ENCODE measurements at regions of chr9 and their contacts with region 1.

Region 1: DNA sequence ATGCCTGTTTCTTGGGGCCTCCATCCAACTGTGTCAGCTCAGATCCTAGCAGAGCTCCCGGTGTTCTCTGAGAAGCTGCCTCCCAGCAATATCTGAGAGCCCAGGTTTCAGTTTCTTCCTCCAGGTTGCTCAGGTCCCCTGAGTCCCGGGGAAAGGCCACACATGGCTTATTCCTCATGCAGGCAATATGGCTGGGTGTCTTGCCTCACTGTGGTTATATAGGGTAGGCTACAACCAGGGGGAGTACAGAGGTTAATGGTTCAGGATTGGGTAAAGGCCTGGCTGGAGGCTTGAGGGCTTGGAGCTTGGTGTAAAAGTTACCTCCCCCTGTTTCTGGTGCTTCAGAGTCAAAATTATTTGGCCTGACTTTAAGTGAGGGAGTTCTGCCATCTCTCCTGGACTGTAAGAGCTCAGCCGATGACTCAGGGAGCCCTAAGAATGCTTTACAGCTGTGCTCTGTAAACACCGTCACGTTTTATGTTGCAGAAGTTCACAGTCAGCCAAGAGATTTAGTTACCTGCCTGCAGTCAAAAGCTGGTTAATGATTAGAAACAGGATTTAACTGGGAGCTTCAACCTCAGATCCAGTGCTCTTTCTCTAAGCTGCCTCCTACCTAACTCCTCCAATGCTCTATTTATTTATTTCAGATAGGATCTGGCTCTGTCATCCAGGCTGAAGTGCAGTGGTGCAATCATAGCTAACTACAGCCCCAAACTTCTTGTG is 24.3 kb upstream of the UBAP2 start:
- DNase-seq: no peak
- ATAC-seq: peak; percentile 9; the same call in 1 of the 2 replicates
- H3K4me3 ChIP-seq: no peak overlapping the region
- H3K27ac ChIP-seq: peak overlapping the region; percentile 53
- H3K4me1 ChIP-seq: peaks cover 17 to 24% of the 10 kb centered on the region in 2 experiments
- H3K27me3 ChIP-seq: no peaks in the 10 kb centered on the region
- CTCF ChIP-seq: no peak
- POLR2A ChIP-seq: no peak
- RAD21 ChIP-seq: no peak

Region 2: GRCh38 chr9:34025062-34025461 is 48.0 kb before region 1 on chr9:
- CTCF ChIA-PET with region 1: no interaction called
- POLR2A ChIA-PET with region 1: no interaction called
- RAD21 ChIA-PET with region 1: no interaction called
- intact Hi-C with region 1: no loop called
- DNase-seq: no peak
- ATAC-seq: no peak
- H3K4me3 ChIP-seq: no peak overlapping the region
- H3K27ac ChIP-seq: no peak overlapping the region
- H3K4me1 ChIP-seq: 0 out of 4 replicates have a peak, but pooled peaks cover 0 to 2% of the 10 kb centered on the region in 2 experiments
- H3K27me3 ChIP-seq: no peaks in the 10 kb centered on the region
- CTCF ChIP-seq: no peak
- POLR2A ChIP-seq: no peak
- RAD21 ChIP-seq: no peak

Region 3: GRCh38 chr9:34084562-34084961 is 11.5 kb after region 1 on chr9:
- CTCF ChIA-PET with region 1: interaction called, 17 read pairs
- POLR2A ChIA-PET with region 1: no interaction called
- RAD21 ChIA-PET with region 1: no interaction called
- intact Hi-C with region 1: no loop called
- DNase-seq: no peak
- ATAC-seq: no peak
- H3K4me3 ChIP-seq: no peak overlapping the region
- H3K27ac ChIP-seq: no peak overlapping the region
- H3K4me1 ChIP-seq: no peaks in the 10 kb centered on the region; a peak in 1 of 4 replicates
- H3K27me3 ChIP-seq: no peaks in the 10 kb centered on the region
- CTCF ChIP-seq: no peak
- POLR2A ChIP-seq: no peak
- RAD21 ChIP-seq: no peak

Measured in HCT116 (cell line).